Endothelial cell of umbilical vein (primary cell): ENCODE measurements at regions of chr10 and their contacts with region 1.

Region 1: GRCh38 chr10:91077549-91078071 is 142.9 kb upstream of the PCGF5 start:
- DNase-seq: peak; percentile 81
- H3K4me3 ChIP-seq: peak overlapping the region in 1 of 3 experiments; percentile 18
- H3K27ac ChIP-seq: no peak overlapping the region
- H3K4me1 ChIP-seq: peaks cover 8% of the 10 kb centered on the region
- H3K27me3 ChIP-seq: peaks cover 2 to 4% of the 10 kb centered on the region in 2 experiments
- CTCF ChIP-seq: no peak
- POLR2A ChIP-seq: no peak

Region 2: DNA sequence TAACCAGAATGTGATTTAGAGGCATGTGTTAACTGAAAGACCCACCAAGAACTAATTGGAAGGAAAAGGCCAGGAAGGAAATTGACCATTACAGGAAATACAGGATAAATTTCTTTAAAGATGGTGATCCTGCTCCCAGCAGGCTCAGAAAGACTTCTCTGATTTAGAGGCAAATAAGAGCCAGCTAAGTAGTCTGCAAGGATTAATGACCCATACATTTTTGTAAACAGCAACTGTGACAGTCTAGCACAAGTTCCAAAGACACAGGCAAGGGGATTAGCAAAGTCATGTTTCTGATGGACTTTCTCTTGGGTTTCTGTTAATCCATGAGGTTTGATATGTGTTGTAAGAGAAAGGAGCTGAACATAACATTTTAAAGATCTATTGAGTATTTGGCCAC is 644.7 kb before region 1 on chr10:
- CTCF ChIA-PET with region 1: no interaction called
- POLR2A ChIA-PET with region 1: no interaction called
- dilution Hi-C with region 1: no loop called
- intact Hi-C with region 1: no loop called
- DNase-seq: no peak
- H3K4me3 ChIP-seq: no peak overlapping the region
- H3K27ac ChIP-seq: no peak overlapping the region
- H3K4me1 ChIP-seq: no peaks in the 10 kb centered on the region
- H3K27me3 ChIP-seq: no peaks in the 10 kb centered on the region
- CTCF ChIP-seq: no peak
- POLR2A ChIP-seq: no peak

Region 3: DNA sequence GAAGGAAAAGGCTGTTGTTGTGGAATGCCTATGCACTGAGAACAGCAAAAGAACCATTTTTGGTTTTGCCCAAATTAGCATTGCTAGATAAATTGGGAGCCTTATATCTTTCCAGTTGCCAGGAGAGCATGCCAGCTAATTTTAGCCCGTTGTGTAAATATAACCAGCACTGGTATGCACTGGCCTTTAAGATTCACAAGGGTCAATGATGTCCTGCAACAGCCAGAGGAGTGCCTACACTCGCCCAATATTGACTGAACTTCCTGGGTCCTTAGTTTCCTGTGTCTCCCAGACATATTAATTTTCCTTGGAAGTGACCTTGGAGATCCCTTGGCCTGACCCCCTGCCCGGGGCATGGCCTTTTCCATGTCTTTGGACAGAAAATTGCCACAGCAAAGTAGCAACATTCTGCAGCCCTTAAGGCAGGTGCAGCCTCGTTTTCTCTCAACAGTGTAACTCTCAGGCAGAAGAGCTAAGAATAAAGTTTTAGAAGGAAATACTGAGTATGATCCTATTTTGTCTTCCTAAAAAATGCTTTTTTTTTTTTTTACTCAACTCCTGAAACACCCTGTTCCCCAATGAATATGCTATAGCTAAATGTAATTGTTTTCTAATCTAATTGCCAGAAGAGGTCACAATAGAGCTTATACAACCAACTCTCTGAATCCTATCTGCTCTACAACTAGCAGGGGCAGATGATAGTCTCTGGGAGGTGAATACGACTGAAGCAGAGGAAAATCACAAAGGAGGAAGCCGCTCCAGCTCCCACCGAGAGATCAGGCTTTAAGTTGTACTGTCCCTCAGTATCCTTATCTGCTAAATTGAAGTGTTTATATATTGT is 10.9 kb after region 1 on chr10:
- CTCF ChIA-PET with region 1: interaction called, 12 read pairs
- POLR2A ChIA-PET with region 1: no interaction called
- dilution Hi-C with region 1: no loop called
- intact Hi-C with region 1: no loop called
- DNase-seq: peak; percentile 8
- H3K4me3 ChIP-seq: no peak overlapping the region
- H3K27ac ChIP-seq: no peak overlapping the region
- H3K4me1 ChIP-seq: no peaks in the 10 kb centered on the region
- H3K27me3 ChIP-seq: no peaks in the 10 kb centered on the region
- CTCF ChIP-seq: no peak
- POLR2A ChIP-seq: no peak

Region 4: DNA sequence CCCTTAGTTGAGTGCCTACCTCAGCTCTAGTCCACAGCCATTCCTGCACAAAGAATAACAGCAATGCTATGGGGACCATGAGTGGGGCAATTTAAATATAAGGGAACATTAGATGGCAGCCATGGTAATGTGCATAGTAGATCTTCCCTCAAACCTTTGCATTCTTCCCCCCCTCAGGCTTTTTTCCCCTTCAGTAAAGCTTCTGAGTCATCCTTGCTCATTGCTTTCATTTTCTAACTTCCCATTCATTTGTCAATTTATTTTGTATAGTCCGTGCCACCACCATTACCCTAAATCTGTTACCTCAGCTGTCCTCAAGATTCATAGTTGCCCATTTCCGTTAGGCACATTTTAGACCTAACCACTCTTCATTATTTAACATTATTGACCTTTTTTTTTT is 343.3 kb after region 1 on chr10:
- CTCF ChIA-PET with region 1: no interaction called
- POLR2A ChIA-PET with region 1: no interaction called
- dilution Hi-C with region 1: no loop called
- intact Hi-C with region 1: no loop called
- DNase-seq: no peak
- H3K4me3 ChIP-seq: no peak overlapping the region
- H3K27ac ChIP-seq: no peak overlapping the region
- H3K4me1 ChIP-seq: no peaks in the 10 kb centered on the region
- H3K27me3 ChIP-seq: no peaks in the 10 kb centered on the region
- CTCF ChIP-seq: no peak
- POLR2A ChIP-seq: no peak